GM10248 (cell line): ENCODE measurements at regions of chr1 and their contacts with region 1.

Region 1: GRCh38 chr1:13674377-13674776 is 25.6 kb upstream of the PRDM2 start:
- DNase-seq: no peak
- CTCF ChIP-seq: no peak

Region 2: DNA sequence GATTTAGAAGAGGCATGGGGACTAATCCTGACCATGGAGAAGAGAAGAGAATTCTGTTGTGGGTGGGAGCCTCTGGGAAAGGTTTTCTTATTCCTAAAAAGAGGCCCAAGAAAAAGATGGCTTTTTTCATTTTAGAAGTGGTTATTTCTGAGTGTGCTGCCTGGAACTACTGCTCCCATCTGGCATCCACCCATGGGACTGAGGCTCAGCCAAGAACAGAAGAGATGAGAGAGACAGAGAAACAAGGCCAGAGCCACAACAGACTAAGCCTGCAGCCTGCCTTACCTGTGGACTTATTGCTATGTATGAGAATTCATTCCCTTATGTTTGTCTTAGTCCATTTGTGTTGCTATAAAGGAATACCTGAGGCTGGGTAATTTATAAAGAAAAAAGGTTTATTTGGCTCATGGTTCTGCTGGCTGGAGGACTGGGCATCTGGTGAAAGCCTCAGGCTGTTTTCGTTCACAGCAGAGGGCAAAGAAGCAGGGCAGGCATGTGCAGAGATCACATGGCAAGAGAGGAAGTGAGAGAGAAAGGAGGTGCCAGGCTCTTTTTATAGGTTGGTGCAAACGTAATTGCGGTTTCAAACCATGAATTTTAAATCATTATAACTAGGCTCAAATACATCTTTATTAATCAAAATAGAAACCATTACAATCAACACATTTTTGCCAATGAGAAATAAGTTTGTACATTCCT is 31.9 kb before region 1 on chr1:
- CTCF ChIA-PET with region 1: no interaction called
- POLR2A ChIA-PET with region 1: no interaction called
- DNase-seq: no peak
- CTCF ChIP-seq: no peak

Region 3: DNA sequence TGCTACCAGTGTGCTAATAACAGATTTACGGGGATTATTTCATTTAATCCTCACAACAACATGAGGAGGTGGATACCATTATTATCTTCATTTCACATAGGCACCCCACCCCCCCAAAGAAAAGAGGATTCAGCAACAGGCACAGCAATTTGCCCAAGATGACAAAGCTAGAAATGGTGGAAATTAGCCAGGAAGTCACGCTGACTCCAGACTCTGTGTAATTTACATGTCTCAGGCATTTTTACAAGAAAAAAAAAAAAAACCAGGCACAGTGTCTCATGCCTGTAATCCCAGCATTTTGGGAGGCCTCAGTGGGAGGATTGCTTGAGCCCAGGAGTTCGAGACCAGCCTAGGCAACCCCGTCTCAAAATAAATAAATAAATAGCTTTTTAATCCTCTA is 11.9 kb before region 1 on chr1:
- CTCF ChIA-PET with region 1: interaction called, 12 read pairs
- POLR2A ChIA-PET with region 1: no interaction called
- DNase-seq: no peak
- CTCF ChIP-seq: no peak

Region 4: DNA sequence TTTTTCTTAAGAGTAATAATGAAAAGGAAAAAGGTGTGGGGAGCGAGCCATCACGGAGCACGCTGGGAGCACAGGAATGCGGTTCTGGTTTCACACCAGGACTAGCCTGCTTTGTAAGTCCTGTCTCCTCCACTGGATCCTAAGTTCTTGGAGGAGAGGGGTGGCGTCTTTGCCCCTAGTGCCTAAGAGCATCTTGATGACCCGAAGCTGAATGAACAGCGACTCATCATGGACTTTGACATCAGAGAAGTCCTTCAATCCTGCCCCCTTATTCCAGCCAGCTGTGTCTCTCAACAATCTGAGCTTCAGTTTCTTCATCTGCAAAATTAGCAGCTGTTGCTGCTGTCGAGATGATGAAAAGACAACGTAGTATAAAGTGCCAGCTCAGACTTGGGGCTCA is 20.5 kb after region 1 on chr1:
- CTCF ChIA-PET with region 1: no interaction called
- POLR2A ChIA-PET with region 1: no interaction called
- DNase-seq: no peak
- CTCF ChIP-seq: no peak